HepG2 (cell line): ENCODE measurements at regions of chr2 and their contacts with region 1.

Region 1: GRCh38 chr2:241609859-241610793 is 26.8 kb downstream of the THAP4 start:
- DNase-seq: peak; percentile 93
- ATAC-seq: peak; percentile 99
- H3K4me3 ChIP-seq: peak overlapping the region; percentile 75 to 89 (median 78)
- H3K27ac ChIP-seq: peak overlapping the region; percentile 86
- H3K4me1 ChIP-seq: peaks cover 32% of the 10 kb centered on the region
- H3K27me3 ChIP-seq: no peaks in the 10 kb centered on the region
- CTCF ChIP-seq: peak; percentile 90
- EP300 ChIP-seq: 0 out of 4 replicates have a peak, but pooled peaks of 1 of the 2 experiments have one; percentile 34
- POLR2A ChIP-seq: peak; percentile 77 to 95
- RAD21 ChIP-seq: peak; percentile 95

Region 2: DNA sequence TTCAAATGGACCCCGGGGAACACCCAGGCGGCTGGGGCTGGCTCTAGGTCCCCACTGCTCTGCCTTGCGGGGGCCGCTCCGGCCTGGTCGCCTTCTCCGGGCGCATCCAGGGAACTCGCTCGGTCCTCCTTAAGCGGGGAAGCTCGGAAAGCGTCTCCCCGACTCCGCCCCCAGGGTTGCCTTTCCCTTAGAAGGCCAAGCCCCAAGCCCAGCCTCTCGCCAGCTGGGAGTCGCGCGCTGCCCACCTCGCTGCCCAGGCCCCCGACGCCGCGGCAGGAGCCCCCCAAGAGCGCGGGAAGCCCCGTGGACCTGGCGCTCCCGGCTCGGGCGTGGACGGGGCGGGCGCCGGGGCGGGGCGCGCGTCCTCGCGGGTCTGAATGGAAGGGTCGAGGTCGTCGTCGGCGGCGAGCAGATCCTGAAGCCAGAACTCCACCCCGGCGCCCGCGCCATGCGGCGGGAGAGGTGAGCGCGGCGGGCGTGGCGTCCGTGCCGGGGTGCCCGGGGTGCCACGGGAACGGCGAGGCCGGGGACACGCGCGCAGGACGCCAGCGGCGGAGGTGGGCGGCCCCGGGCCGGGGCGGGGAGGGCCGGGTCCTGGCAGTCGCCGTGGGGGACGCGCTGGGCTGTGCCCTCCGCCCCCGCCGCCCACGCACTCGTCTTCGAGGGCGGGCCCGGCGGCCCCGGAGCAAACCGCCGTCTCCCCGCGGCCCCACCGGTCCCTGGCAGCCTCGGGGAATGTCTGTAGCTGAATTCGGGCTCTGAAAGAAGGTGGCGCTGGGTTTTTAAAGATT is 51.4 kb before region 1 on chr2 and contains the start of gene BOK:
- CTCF ChIA-PET with region 1: no interaction called
- POLR2A ChIA-PET with region 1: interaction called, 12 read pairs
- in situ Hi-C with region 1: no loop called
- intact Hi-C with region 1: no loop called
- DNase-seq: peak; percentile 73
- ATAC-seq: peak; percentile 60
- H3K4me3 ChIP-seq: peak within 1 kb of the TSS; percentile 85 to 93 (median 86)
- H3K27ac ChIP-seq: peak within 1 kb of the TSS; percentile 53
- H3K4me1 ChIP-seq: peaks cover 63% of the 10 kb centered on the region
- H3K27me3 ChIP-seq: no peaks in the 10 kb centered on the region; a peak in 1 of 5 replicates
- CTCF ChIP-seq: no peak; the same call in 1 of the 2 replicates
- EP300 ChIP-seq: no peak
- POLR2A ChIP-seq: no peak; a peak in 1 of 4 replicates
- RAD21 ChIP-seq: peak; percentile 5
- total RNA-seq, gene BOK: 30.2 and 35.5 TPM in 2 replicates

Region 3: GRCh38 chr2:241584423-241584822 is 25.7 kb before region 1 on chr2:
- CTCF ChIA-PET with region 1: no interaction called
- POLR2A ChIA-PET with region 1: no interaction called
- in situ Hi-C with region 1: no loop called
- intact Hi-C with region 1: loop called (anchors 1 kb)
- DNase-seq: no peak
- ATAC-seq: no peak
- H3K4me3 ChIP-seq: no peak overlapping the region
- H3K27ac ChIP-seq: no peak overlapping the region
- H3K4me1 ChIP-seq: no peaks in the 10 kb centered on the region
- H3K27me3 ChIP-seq: no peaks in the 10 kb centered on the region
- CTCF ChIP-seq: no peak
- EP300 ChIP-seq: no peak
- POLR2A ChIP-seq: no peak
- RAD21 ChIP-seq: no peak

Region 4: DNA sequence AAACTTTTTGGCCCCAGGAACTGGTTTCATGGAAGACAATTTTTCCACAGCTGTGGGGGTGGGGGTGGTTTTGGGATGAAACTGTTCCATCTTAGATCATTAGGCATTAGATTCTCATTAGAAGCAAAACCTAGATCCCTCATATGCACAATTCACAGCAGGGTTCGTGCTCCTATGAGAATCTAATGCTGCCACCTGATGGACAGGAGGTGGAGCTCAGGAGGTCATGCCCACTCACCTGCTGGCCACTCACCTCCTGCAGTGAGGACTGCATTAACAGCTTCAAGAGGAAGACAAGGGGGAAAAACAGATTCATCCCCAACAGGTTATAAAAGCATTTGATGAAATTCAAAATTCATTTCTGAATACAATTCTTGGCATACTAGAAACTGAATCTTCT is 11.6 kb before region 1 on chr2:
- CTCF ChIA-PET with region 1: no interaction called
- POLR2A ChIA-PET with region 1: interaction called, 10 read pairs
- in situ Hi-C with region 1: no loop called
- intact Hi-C with region 1: no loop called
- DNase-seq: peak; percentile 45
- ATAC-seq: peak; percentile 72
- H3K4me3 ChIP-seq: no peak overlapping the region
- H3K27ac ChIP-seq: no peak overlapping the region
- H3K4me1 ChIP-seq: no peaks in the 10 kb centered on the region
- H3K27me3 ChIP-seq: no peaks in the 10 kb centered on the region
- CTCF ChIP-seq: peak; percentile 80
- EP300 ChIP-seq: no peak
- POLR2A ChIP-seq: no peak
- RAD21 ChIP-seq: no peak

Region 5: GRCh38 chr2:241858206-241859016 is 248.3 kb after region 1 on chr2 and contains the start of gene PDCD1:
- CTCF ChIA-PET with region 1: no interaction called
- POLR2A ChIA-PET with region 1: no interaction called
- in situ Hi-C with region 1: no loop called
- intact Hi-C with region 1: no loop called
- DNase-seq: peak; percentile 31
- ATAC-seq: peak; percentile 61
- H3K4me3 ChIP-seq: peak within 1 kb of the TSS in 1 of 3 experiments; percentile 14; a peak in 1 of 6 replicates
- H3K27ac ChIP-seq: no peak within 1 kb of the TSS
- H3K4me1 ChIP-seq: peaks cover 14% of the 10 kb centered on the region
- H3K27me3 ChIP-seq: peaks cover 21 to 87% of the 10 kb centered on the region in 2 experiments
- CTCF ChIP-seq: no peak
- EP300 ChIP-seq: no peak
- POLR2A ChIP-seq: no peak
- RAD21 ChIP-seq: no peak
- total RNA-seq, gene PDCD1: not detected in 2 replicates